Right ventricle myocardium inferior (tissue), 1 donor: ENCODE measurements at regions of chr7 and their contacts with region 1.

Region 1: DNA sequence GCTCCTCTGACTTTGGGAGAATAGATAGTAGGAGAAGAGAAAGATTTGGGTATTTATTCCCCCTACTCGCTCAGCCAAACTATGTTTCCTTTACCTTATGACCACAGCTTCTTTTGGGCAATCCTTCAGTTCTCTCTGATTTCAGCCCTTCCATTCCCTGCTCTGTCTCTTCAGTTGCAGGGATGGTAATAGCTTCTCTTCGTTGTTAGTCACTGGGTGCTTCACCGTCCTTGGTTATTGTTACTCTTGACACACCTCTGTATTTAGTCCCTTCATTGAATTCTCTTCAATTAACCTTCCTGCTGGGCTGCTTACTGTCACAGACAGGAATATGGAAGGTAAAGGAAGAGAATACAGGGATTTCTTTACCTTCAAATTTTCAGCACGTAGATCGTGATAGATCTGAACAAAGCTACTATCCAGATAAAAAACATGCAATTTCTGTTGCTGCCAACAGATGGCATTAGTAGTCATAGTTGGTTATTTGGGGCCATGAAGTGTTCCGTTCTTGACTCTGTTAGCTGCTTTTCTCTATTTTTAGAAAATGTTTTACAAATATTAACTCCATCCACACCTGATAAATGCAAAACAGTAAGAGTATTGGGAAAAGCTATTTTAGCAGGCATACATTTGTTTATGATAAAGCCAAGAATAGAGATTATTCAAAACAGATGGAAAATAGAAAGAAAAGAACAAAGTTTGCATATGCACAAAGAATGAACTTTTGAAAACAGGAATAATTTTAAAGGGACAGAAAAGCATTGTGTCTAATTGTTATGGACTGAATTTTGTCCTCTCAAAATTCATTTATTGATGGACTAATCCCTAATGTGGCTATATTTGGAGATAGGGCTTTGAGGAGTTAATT is 14.0 kb upstream of the PTTG1IP2 start:
- DNase-seq: no peak
- ATAC-seq: peak; percentile 63

Region 2: GRCh38 chr7:90430614-90431471 is 24.6 kb before region 1 on chr7:
- intact Hi-C with region 1: no loop called
- DNase-seq: no peak
- ATAC-seq: no peak

Region 3: DNA sequence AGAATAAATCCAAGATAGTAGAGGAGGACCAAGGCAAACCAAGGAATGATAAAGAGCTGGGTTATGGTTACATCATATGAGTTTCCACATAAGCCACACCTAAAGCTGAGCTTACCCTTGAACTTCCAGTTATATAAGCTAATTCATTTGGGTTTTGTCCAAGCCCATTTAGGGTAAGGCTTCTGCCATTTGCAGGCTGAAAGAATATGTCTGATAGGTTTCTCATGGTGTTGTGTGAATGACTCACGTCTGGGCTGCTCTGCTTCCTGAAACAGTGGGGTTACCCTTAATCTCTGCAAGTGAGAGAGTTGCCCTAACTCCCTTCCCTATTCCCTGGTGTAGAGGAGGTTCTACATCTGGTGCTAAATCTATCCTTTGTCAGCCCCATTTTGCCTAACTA is 74.9 kb after region 1 on chr7:
- intact Hi-C with region 1: loop called (anchors 5 kb)
- DNase-seq: no peak
- ATAC-seq: no peak

Region 4: GRCh38 chr7:90834771-90835170 is 379.4 kb after region 1 on chr7:
- intact Hi-C with region 1: loop called (anchors 10 kb)
- DNase-seq: no peak
- ATAC-seq: no peak